ENCODE measurements at regions of chr12 and their contacts with region 1.

Region 1: DNA sequence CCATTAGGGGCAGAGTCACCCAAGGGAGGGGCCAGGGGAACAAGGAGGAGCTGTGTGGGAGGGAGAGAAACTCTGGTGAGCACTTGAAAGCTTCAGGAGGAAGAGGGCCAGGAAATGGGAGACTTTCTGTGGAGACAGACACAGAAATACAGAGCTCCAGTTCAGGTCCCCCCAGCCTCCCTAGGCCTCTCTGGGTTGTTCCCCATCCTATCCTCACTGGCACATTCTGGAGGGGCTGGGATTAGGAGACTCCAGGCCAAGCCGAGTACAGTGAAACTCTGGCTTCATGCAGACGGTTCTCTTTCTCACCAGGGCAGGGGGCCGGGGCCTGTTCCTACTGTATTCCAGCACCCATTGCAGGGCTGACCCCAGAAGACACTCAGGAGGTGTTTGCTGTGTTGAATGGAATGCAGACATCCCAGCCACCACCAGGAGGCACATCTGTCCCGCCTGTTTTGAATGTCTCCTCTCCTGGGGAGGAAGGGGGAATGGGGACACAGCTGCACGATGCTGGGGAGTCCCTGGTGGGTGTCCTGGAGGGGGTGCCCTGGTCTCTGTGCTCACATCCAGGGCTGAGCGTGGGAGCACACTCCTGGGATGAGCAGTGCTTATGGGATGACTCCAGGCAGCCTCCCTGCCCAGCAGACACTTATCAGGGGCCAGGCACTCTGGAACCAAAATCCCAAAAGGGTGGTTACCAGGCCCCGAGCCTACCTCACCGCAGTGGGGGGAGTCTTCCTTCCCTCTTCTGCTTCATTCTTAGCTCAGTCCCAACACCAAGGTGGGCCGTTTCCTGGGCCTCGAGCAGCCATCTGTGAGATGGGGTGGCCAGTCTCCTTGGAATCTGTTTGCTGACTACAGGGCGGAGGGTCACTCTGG is 5.5 kb upstream of the KRT84 start:
- DNase-seq: peak in 1 of 2 experiments; percentile 66
- H3K4me3 ChIP-seq: no peak overlapping the region
- H3K27ac ChIP-seq: no peak overlapping the region
- H3K4me1 ChIP-seq: peaks cover 0 to 7% (median 1%) of the 10 kb centered on the region in 4 experiments; a peak in 2 of 7 replicates
- H3K27me3 ChIP-seq: peaks cover 0 to 4% (median 0%) of the 10 kb centered on the region in 4 experiments; a peak in 1 of 7 replicates
- CTCF ChIP-seq: peak; percentile 83 to 91 (median 84)
- EP300 ChIP-seq: no peak
- POLR2A ChIP-seq: no peak
- RAD21 ChIP-seq: peak; percentile 73 to 74

Region 2: DNA sequence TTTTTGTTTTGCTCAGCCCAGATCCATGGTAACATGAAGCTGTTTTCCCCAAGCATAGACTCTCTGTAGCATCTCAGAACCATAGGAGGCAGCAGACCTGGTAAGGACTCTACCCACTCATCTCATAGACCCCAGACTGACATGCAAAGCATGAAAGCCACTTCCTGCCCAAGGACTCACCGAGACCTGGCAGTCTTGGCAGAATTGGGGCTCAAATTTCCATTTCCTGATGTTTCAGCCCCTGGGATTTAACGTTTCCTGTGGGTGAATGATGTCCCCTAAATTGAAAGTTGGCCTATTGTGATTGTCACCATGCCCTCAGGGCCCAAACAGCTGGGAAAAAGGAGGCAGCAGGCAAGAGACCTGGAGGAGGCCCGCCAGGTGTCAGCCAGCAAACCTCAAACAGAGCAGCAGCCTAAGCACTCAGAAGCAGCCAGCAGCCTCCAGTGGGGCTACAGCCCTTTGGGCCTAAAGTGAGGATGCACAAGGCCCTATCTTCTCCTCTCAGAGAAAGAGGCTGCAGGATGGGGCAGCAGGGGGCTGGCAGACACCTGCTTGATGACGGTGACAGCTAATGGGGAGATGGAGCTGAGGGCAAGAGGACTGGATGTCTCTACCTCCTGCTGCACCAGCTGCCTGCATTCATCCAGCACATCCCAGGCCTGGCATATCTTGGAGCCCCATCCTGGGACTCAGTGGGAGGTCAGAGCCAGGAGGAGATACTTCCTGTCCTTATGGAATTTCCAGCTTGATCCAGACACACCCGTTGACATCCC is 32.2 kb before region 1 on chr12:
- CTCF ChIA-PET with region 1: interaction called, 12 read pairs
- POLR2A ChIA-PET with region 1: no interaction called
- DNase-seq: no peak
- H3K4me3 ChIP-seq: no peak overlapping the region
- H3K27ac ChIP-seq: no peak overlapping the region
- H3K4me1 ChIP-seq: no peaks in the 10 kb centered on the region
- H3K27me3 ChIP-seq: no peaks in the 10 kb centered on the region
- CTCF ChIP-seq: no peak
- EP300 ChIP-seq: no peak
- POLR2A ChIP-seq: no peak
- RAD21 ChIP-seq: no peak

Region 3: GRCh38 chr12:52416383-52416750 is 25.4 kb after region 1 on chr12:
- CTCF ChIA-PET with region 1: interaction called, 46 read pairs
- POLR2A ChIA-PET with region 1: no interaction called
- DNase-seq: no peak
- H3K4me3 ChIP-seq: no peak overlapping the region
- H3K27ac ChIP-seq: no peak overlapping the region
- H3K4me1 ChIP-seq: no peaks in the 10 kb centered on the region
- H3K27me3 ChIP-seq: no peaks in the 10 kb centered on the region
- CTCF ChIP-seq: no peak
- EP300 ChIP-seq: no peak
- POLR2A ChIP-seq: no peak
- RAD21 ChIP-seq: no peak

Region 4: DNA sequence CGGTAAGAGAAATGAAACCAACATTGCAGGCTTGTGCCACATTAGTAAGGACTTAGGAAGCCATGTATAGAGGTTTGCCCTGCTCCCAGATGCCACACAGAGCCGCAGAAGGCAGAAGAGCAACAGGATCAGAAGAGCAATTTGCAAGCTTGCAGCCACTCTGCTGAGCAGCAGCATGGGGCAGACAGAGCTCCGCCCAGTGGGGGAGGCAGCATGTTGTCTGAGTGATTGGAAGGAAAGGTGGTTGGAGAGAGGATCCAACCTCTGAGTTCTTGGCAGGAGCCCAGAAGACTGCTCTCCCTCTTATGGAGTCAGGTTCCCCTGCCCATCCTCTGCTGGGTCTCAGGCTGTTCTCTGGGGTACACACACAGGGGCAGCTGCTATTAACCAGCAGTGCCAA is 104.4 kb after region 1 on chr12:
- CTCF ChIA-PET with region 1: interaction called, 20 read pairs
- POLR2A ChIA-PET with region 1: no interaction called
- DNase-seq: peak in 1 of 2 experiments; percentile 58
- H3K4me3 ChIP-seq: no peak overlapping the region
- H3K27ac ChIP-seq: no peak overlapping the region
- H3K4me1 ChIP-seq: peaks cover 5 to 10% (median 8%) of the 10 kb centered on the region in 4 experiments; a peak in 6 of 7 replicates
- H3K27me3 ChIP-seq: no peaks in the 10 kb centered on the region; a peak in 1 of 7 replicates
- CTCF ChIP-seq: no peak
- EP300 ChIP-seq: no peak
- POLR2A ChIP-seq: no peak
- RAD21 ChIP-seq: peak in 1 of 2 experiments; percentile 28; a peak in 1 of 4 replicates

Region 5: DNA sequence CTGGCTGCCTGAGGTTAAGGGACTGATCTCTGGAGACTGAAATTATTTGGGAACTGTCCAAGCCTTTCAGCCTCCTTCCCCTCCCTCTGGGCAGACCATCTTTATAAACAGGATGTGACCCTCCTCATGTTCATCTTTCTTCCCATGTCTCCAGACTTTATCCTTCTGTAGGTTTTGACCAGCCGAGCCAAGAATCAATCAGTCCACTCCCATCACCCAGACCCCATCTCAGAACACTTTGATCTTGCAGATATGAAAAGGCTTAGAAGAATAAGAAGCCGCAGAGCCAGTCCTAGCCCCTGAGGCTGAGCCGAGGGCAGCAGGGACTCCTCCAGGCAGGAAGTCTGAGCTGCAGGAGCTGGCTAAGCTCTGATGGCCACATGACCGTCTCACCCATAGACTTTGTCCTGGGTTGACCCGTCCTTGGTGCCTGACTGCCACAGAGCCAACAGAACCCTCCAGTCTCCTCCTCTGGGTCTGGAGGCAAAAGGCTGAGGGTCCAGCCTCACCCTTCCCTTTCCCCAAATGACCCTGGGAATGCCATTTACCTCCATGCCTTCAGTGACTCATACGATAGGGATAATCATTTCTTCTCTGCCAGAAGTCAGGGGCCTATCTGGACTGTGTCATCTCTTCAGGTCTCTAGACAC is 160.4 kb after region 1 on chr12:
- CTCF ChIA-PET with region 1: interaction called, 22 read pairs
- POLR2A ChIA-PET with region 1: no interaction called
- DNase-seq: no peak
- H3K4me3 ChIP-seq: no peak overlapping the region
- H3K27ac ChIP-seq: no peak overlapping the region
- H3K4me1 ChIP-seq: no peaks in the 10 kb centered on the region
- H3K27me3 ChIP-seq: no peaks in the 10 kb centered on the region
- CTCF ChIP-seq: no peak
- EP300 ChIP-seq: no peak
- POLR2A ChIP-seq: no peak
- RAD21 ChIP-seq: no peak

Region 6: GRCh38 chr12:52582971-52583456 is 192.0 kb after region 1 on chr12:
- CTCF ChIA-PET with region 1: interaction called, 69 read pairs
- POLR2A ChIA-PET with region 1: no interaction called
- DNase-seq: peak; percentile 21 to 78
- H3K4me3 ChIP-seq: no peak overlapping the region
- H3K27ac ChIP-seq: no peak overlapping the region
- H3K4me1 ChIP-seq: no peaks in the 10 kb centered on the region
- H3K27me3 ChIP-seq: no peaks in the 10 kb centered on the region; a peak in 1 of 7 replicates
- CTCF ChIP-seq: peak; percentile 58 to 90 (median 86)
- EP300 ChIP-seq: no peak
- POLR2A ChIP-seq: no peak
- RAD21 ChIP-seq: peak; percentile 90 to 92

Region 7: GRCh38 chr12:52879394-52880351 is 488.7 kb after region 1 on chr12:
- CTCF ChIA-PET with region 1: interaction called, 85 read pairs
- POLR2A ChIA-PET with region 1: no interaction called
- DNase-seq: peak in 1 of 2 experiments; percentile 86
- H3K4me3 ChIP-seq: peak overlapping the region in 3 of 4 experiments; percentile 29 to 59 (median 42); a peak in 6 of 8 replicates
- H3K27ac ChIP-seq: no peak overlapping the region
- H3K4me1 ChIP-seq: peaks cover 0 to 8% (median 4%) of the 10 kb centered on the region in 4 experiments; a peak in 4 of 7 replicates
- H3K27me3 ChIP-seq: peaks cover 0 to 10% (median 5%) of the 10 kb centered on the region in 4 experiments; a peak in 3 of 7 replicates
- CTCF ChIP-seq: peak; percentile 80 to 98 (median 98)
- EP300 ChIP-seq: no peak
- POLR2A ChIP-seq: no peak
- RAD21 ChIP-seq: peak; percentile 96